Mammary epithelial cell (primary cell): ENCODE measurements at regions of chr4 and their contacts with region 1.

Region 1: DNA sequence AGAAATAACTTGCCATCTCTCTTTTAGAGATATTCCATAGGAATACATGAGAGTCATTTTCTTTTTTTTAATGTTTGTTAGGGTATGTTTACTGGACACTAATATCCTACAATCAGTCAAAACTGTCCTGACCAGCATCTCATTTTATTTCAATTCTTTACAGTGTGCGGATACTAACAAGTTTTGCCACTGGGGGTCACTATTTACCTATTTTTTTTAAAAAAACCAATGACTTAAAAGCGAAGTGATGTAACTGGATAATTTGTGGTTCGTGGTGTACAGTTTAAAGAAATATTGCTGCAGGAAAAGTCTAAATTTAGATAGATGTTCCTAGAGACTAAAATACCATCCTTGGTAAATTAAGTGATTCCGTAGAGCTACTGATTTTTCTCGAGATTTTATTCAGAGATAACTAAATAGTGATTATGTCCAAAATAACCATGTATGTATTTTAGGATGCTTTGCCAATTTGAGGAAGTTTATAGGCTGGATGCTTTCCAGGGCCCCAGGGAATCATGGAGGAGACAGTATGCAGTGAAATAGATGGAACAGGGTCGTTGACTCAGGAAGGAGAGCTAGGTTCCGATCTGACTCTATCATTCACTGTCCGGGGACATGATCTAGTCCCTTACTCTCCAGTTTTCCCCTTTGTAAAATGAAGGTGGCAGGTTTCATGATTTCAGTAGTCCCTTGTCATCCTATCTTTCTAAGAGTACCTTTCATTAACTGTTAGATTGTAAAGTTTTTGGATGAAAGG is 34.0 kb upstream of the GNPDA2 start:
- DNase-seq: peak; percentile 12
- H3K4me3 ChIP-seq: no peak overlapping the region
- H3K27ac ChIP-seq: no peak overlapping the region
- H3K4me1 ChIP-seq: peaks cover 4% of the 10 kb centered on the region
- H3K27me3 ChIP-seq: no peaks in the 10 kb centered on the region
- CTCF ChIP-seq: peak; percentile 44 to 47

Region 2: GRCh38 chr4:45442466-45442865 is 682.1 kb after region 1 on chr4:
- CTCF ChIA-PET with region 1: no interaction called
- dilution Hi-C with region 1: no loop called
- in situ Hi-C with region 1: no loop called
- intact Hi-C with region 1: loop called (anchors 2 kb)
- DNase-seq: peak; percentile 31
- H3K4me3 ChIP-seq: no peak overlapping the region
- H3K27ac ChIP-seq: no peak overlapping the region
- H3K4me1 ChIP-seq: peaks cover 3% of the 10 kb centered on the region
- H3K27me3 ChIP-seq: no peaks in the 10 kb centered on the region
- CTCF ChIP-seq: peak; percentile 40 to 59

Region 3: GRCh38 chr4:46270986-46271596 is 1510.8 kb after region 1 on chr4:
- CTCF ChIA-PET with region 1: no interaction called
- dilution Hi-C with region 1: no loop called
- in situ Hi-C with region 1: loop called in 1 of 2 experiments (anchors 25 kb)
- intact Hi-C with region 1: loop called (anchors 1 kb)
- DNase-seq: peak; percentile 21
- H3K4me3 ChIP-seq: no peak overlapping the region
- H3K27ac ChIP-seq: no peak overlapping the region
- H3K4me1 ChIP-seq: no peaks in the 10 kb centered on the region
- H3K27me3 ChIP-seq: no peaks in the 10 kb centered on the region
- CTCF ChIP-seq: peak; percentile 46 to 58